Ovary (tissue), 10 donors: ENCODE measurements at regions of chr5 and their contacts with region 1.

Region 1: DNA sequence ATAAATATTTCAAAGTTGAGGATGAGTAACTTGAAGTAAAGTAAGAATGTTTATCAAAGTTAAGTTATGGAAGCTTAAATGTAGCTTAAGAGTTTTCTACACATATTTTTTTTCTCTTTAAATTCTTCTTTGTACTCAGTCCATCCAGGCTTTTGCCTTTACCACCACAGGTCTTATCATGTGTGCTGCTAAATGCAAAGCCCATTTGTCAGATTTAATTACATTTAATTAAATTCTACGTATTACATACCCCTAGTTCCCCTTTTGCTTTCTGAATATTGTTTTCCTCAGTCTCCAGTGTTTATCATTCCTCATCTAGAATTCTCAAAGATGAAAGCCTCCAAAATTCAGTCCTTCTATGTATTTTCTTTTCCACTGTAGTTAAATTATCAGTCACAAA is 1841.9 kb downstream of the EFNA5 start:
- DNase-seq: no peak
- H3K4me3 ChIP-seq: no peak overlapping the region
- H3K27ac ChIP-seq: no peak overlapping the region
- H3K4me1 ChIP-seq: no peaks in the 10 kb centered on the region
- H3K27me3 ChIP-seq: no peaks in the 10 kb centered on the region
- CTCF ChIP-seq: no peak
- EP300 ChIP-seq: no peak
- POLR2A ChIP-seq: no peak

Region 2: GRCh38 chr5:104011716-104012115 is 1817.1 kb before region 1 on chr5:
- intact Hi-C with region 1: loop called in 1 of 4 experiments (anchors 5 kb)
- DNase-seq: no peak
- H3K4me3 ChIP-seq: no peak overlapping the region
- H3K27ac ChIP-seq: no peak overlapping the region
- H3K4me1 ChIP-seq: no peaks in the 10 kb centered on the region
- H3K27me3 ChIP-seq: no peaks in the 10 kb centered on the region
- CTCF ChIP-seq: no peak
- EP300 ChIP-seq: no peak
- POLR2A ChIP-seq: no peak

Region 3: DNA sequence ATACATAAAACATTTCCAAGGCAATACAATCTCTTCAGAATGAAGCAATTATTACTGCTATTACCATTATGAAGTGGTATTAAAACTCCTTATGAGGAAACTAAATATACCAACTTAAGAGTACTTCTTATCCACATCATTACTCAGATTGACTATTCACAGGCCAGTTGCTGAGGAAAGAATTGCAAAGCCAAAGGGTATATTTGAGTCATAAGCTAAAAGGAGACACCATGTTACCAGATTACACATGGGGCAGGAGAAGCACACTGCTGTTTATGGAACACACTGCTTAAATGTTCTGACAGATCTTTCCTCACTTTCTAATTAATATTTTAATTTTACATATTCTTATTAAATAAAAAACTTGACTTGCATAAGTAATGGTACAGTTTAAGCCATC is 539.9 kb before region 1 on chr5:
- intact Hi-C with region 1: no loop called
- DNase-seq: no peak
- H3K4me3 ChIP-seq: no peak overlapping the region
- H3K27ac ChIP-seq: no peak overlapping the region
- H3K4me1 ChIP-seq: no peaks in the 10 kb centered on the region
- H3K27me3 ChIP-seq: no peaks in the 10 kb centered on the region
- CTCF ChIP-seq: no peak
- EP300 ChIP-seq: no peak
- POLR2A ChIP-seq: no peak

Region 4: GRCh38 chr5:105868038-105868780 is 39.4 kb after region 1 on chr5:
- intact Hi-C with region 1: loop called in 1 of 4 experiments (anchors 2 kb)
- DNase-seq: no peak
- H3K4me3 ChIP-seq: no peak overlapping the region
- H3K27ac ChIP-seq: no peak overlapping the region
- H3K4me1 ChIP-seq: peaks cover 3% of the 10 kb centered on the region
- H3K27me3 ChIP-seq: no peaks in the 10 kb centered on the region
- CTCF ChIP-seq: no peak
- EP300 ChIP-seq: no peak
- POLR2A ChIP-seq: no peak

Region 5: GRCh38 chr5:106014262-106014661 is 185.4 kb after region 1 on chr5:
- intact Hi-C with region 1: no loop called
- DNase-seq: no peak
- H3K4me3 ChIP-seq: no peak overlapping the region
- H3K27ac ChIP-seq: no peak overlapping the region
- H3K4me1 ChIP-seq: no peaks in the 10 kb centered on the region
- H3K27me3 ChIP-seq: no peaks in the 10 kb centered on the region
- CTCF ChIP-seq: no peak
- EP300 ChIP-seq: no peak
- POLR2A ChIP-seq: no peak